ENCODE measurements at regions of chr12 and their contacts with region 1.

Region 1: DNA sequence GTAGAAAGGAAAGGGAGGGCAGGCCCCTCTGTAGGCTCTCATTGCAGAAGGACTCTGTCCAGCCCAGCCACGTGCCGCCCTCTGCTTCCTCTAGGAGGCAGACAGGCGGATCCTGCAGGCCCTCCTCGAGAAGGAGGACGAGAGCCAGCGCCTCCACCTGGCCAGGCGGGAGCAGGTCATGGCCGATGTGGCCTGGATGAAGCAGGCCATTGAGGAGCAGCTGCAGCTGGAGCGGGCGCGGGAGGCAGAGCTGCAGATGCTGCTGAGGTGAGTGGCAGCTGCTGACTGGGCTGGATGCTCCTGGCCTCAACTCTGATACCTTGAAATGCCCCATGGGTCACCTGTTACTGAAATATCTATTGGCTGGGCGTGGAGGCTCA is 10.9 kb downstream of the TCHP start:
- DNase-seq: peak; percentile 60 to 87
- H3K4me3 ChIP-seq: no peak overlapping the region
- H3K27ac ChIP-seq: no peak overlapping the region
- H3K4me1 ChIP-seq: no peaks in the 10 kb centered on the region; a peak in 1 of 7 replicates
- H3K27me3 ChIP-seq: peaks cover 0 to 17% (median 7%) of the 10 kb centered on the region in 4 experiments; a peak in 3 of 7 replicates
- CTCF ChIP-seq: peak; percentile 99 to 100 (median 99)
- EP300 ChIP-seq: no peak
- POLR2A ChIP-seq: no peak
- RAD21 ChIP-seq: peak; percentile 72 to 83

Region 2: GRCh38 chr12:109544955-109545531 is 365.9 kb before region 1 on chr12:
- CTCF ChIA-PET with region 1: no interaction called
- POLR2A ChIA-PET with region 1: no interaction called
- DNase-seq: no peak
- H3K4me3 ChIP-seq: no peak overlapping the region
- H3K27ac ChIP-seq: no peak overlapping the region
- H3K4me1 ChIP-seq: no peaks in the 10 kb centered on the region
- H3K27me3 ChIP-seq: no peaks in the 10 kb centered on the region; a peak in 1 of 7 replicates
- CTCF ChIP-seq: no peak
- EP300 ChIP-seq: no peak
- POLR2A ChIP-seq: no peak
- RAD21 ChIP-seq: no peak

Region 3: DNA sequence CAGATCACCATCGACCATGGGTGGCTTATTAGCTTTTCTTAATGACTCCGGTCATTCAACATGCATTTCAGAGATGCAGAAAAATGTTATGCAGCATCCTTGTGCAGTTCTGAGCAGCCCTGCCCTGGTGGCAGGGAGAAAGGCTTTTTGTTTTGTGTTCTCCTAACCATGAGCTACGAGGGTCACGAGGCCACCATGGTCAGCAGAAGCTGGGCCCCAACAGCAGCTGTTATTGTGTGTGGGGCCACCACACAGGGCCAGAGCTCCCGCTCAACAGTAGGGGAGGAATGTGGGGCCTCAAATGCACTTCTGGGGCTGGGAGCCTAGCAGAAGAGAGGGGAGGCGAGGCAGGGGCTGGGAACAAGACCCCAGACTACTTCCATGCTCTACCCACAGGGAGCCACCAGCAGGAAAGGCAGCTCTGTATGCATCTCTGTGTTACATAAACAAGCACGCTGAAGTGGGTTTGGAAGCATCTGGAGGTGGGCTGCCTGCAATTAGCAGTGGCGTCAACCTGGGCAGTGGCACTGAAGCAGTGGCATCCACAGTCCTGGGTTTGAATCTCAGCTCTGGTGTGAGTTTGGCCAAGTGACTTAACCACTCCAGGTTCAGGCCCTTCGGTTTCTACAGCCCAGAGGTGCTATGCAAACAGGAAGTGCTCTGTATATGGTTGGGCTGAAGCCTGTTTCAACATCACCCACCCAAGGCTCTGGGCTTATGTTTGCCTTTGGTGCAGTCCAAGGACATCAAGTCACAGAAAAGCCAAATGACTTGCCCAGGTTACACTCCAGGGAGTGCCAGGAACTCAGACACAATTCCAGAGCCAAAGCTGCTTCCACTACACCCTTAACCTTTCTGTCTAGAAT is 46.9 kb before region 1 on chr12:
- CTCF ChIA-PET with region 1: interaction called, 13 read pairs
- POLR2A ChIA-PET with region 1: no interaction called
- DNase-seq: no peak
- H3K4me3 ChIP-seq: no peak overlapping the region
- H3K27ac ChIP-seq: no peak overlapping the region
- H3K4me1 ChIP-seq: peaks cover 0 to 6% (median 4%) of the 10 kb centered on the region in 4 experiments; a peak in 4 of 7 replicates
- H3K27me3 ChIP-seq: no peaks in the 10 kb centered on the region
- CTCF ChIP-seq: no peak
- EP300 ChIP-seq: no peak
- POLR2A ChIP-seq: no peak
- RAD21 ChIP-seq: no peak

Region 4: DNA sequence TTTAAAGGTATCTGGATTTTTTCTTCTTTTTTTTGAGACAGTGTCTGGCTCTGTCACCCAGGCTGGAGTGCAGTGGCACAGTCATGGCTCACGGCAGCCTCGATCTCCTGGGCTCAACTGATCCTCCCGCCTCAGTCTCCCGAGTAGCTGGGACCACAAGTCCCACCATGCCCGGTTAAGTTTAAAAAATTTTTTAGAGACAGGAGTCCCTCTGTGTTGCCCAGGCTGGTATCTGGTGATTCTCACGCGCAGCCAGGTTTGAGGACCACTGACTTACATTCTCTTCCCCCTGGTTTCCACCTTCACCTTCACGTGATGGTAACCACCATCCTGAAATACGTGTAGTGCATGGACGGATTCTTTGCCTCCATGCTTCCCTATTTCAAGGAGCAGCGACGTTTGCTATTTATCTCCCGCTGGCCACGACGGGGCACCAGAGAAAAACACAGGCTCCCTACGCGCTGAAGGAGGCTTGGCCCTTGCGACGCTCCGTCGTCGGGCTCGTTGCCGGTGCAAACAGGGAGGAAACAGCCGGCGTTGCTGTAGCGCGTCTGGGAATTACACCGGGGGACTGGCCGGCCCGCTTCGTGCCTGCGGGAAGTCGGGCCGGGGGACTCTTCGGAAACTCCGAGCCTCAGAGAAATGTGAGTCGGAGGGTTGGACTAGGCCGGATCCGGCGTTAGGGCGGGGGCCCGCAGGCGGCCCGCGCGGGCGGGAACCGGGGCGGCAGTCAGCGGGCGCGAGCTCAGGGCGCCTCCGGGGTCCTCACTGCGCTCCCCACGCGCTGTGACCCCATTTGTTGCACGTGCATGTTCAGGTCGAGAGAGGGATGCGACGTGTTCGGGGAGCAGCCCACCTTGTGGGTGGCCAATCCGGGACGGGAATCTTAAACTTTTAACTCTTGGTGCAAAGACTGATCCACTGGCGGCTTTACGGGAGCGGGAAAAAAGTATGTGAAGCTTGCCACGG is 10.9 kb before region 1 on chr12 and contains the start of gene TCHP:
- CTCF ChIA-PET with region 1: interaction called, 19 read pairs
- POLR2A ChIA-PET with region 1: interaction called, 6 read pairs
- DNase-seq: peak; percentile 34 to 76
- H3K4me3 ChIP-seq: peak within 1 kb of the TSS; percentile 45 to 75 (median 66)
- H3K27ac ChIP-seq: no peak within 1 kb of the TSS
- H3K4me1 ChIP-seq: peaks cover 0 to 10% (median 2%) of the 10 kb centered on the region in 4 experiments; a peak in 3 of 7 replicates
- H3K27me3 ChIP-seq: peaks cover 49 to 91% (median 87%) of the 10 kb centered on the region in 4 experiments
- CTCF ChIP-seq: no peak
- EP300 ChIP-seq: no peak
- POLR2A ChIP-seq: no peak
- RAD21 ChIP-seq: no peak
- total RNA-seq, gene TCHP: 4.5 TPM in 2 replicates

Measured in H1 (cell line).